ENCODE measurements at regions of chr1 and their contacts with region 1.

Region 1: GRCh38 chr1:221829327-221830015 is 87.6 kb upstream of the DUSP10 start:
- DNase-seq: peak; percentile 48
- H3K4me3 Mint-ChIP-seq: peak overlapping the region; percentile 73
- H3K27ac Mint-ChIP-seq: peak overlapping the region; percentile 97
- H3K4me1 Mint-ChIP-seq: peaks cover 91% of the 10 kb centered on the region
- H3K27me3 Mint-ChIP-seq: no peaks in the 10 kb centered on the region

Region 2: DNA sequence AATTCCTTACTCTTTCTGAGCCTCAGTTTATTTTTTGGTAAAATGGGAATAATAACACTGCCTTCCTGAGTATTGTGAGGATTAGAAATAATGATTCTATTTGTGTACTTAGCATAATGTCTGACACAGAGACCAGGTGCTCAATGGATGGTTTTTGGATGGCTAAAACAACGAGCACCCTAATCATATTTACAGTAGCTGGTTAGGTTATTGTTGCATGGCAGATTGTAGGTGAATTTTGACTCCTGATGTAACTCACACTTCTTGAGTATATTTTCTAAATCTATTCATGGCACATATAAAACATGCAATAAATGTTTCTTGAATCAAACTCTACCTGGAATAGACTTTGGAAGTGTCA is 75.7 kb before region 1 on chr1:
- intact Hi-C with region 1: loop called (anchors 1 kb)
- DNase-seq: no peak
- H3K4me3 Mint-ChIP-seq: peak overlapping the region; percentile 59
- H3K27ac Mint-ChIP-seq: peak overlapping the region; percentile 82
- H3K4me1 Mint-ChIP-seq: peaks cover 69% of the 10 kb centered on the region
- H3K27me3 Mint-ChIP-seq: no peaks in the 10 kb centered on the region

Region 3: GRCh38 chr1:221839796-221840395 is 10.4 kb after region 1 on chr1:
- intact Hi-C with region 1: loop called (anchors 1 kb)
- DNase-seq: peak; percentile 26
- H3K4me3 Mint-ChIP-seq: no peak overlapping the region
- H3K27ac Mint-ChIP-seq: peak overlapping the region; percentile 64
- H3K4me1 Mint-ChIP-seq: peaks cover 57% of the 10 kb centered on the region
- H3K27me3 Mint-ChIP-seq: peaks cover 2% of the 10 kb centered on the region

Region 4: GRCh38 chr1:221878134-221878533 is 48.7 kb after region 1 on chr1:
- intact Hi-C with region 1: loop called (anchors 1 kb)
- DNase-seq: no peak
- H3K4me3 Mint-ChIP-seq: no peak overlapping the region
- H3K27ac Mint-ChIP-seq: no peak overlapping the region
- H3K4me1 Mint-ChIP-seq: peaks cover 11% of the 10 kb centered on the region
- H3K27me3 Mint-ChIP-seq: peaks cover 5% of the 10 kb centered on the region

Region 5: GRCh38 chr1:221961532-221962292 is 132.2 kb after region 1 on chr1:
- intact Hi-C with region 1: loop called (anchors 5 kb)
- DNase-seq: peak; percentile 38
- H3K4me3 Mint-ChIP-seq: peak overlapping the region; percentile 23
- H3K27ac Mint-ChIP-seq: no peak overlapping the region
- H3K4me1 Mint-ChIP-seq: peaks cover 16% of the 10 kb centered on the region
- H3K27me3 Mint-ChIP-seq: peaks cover 4% of the 10 kb centered on the region

Region 6: DNA sequence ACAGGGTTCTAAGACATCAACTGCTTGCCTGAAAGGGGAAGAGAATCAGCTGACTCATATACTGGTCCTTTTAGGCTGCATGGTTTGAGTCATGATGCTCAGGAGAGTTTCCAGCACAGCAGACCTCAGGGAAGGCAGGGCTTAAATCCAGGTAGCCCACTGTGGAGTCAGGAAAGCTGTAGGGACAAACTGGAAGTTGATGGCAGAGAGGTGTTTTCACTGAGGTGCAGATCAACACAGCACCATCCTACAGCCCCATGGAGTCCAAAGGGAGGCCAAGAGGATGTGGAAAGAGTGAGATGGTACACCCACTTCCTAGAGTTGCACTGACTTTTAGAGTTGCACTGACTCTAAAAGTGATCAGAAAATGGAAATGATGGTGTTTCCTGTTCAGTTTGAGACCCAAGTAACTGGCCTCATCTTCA is 164.8 kb after region 1 on chr1:
- intact Hi-C with region 1: loop called (anchors 5 kb)
- DNase-seq: no peak
- H3K4me3 Mint-ChIP-seq: no peak overlapping the region
- H3K27ac Mint-ChIP-seq: peak overlapping the region; percentile 77
- H3K4me1 Mint-ChIP-seq: peaks cover 40% of the 10 kb centered on the region
- H3K27me3 Mint-ChIP-seq: peaks cover 2% of the 10 kb centered on the region

Measured in activated T-helper 1 cell treated with anti-CD3 and anti-CD28 coated beads, Interleukin-12 subunit alpha, Interleukin-12 subunit beta, Interleukin-2, Interleukin-4 antibody, amounts not matched to agents 30 ng/mL and 10 ng/mL and 1 ng/mL, durations not matched to agents 14 hours and 24 hours and 36 hours (primary cell).